Activated naive CD8-positive, alpha-beta T cell treated with anti-CD3 and anti-CD28 coated beads, Interleukin-2, amount 10 ng/mL, durations not matched to agents 7 days and 5 days (primary cell): ENCODE measurements at regions of chr15 and their contacts with region 1.

Region 1: GRCh38 chr15:41904541-41905005 is 10.7 kb upstream of the SPTBN5 start:
- DNase-seq: peak; percentile 70
- ATAC-seq: peak; percentile 81
- H3K4me3 Mint-ChIP-seq: no peak overlapping the region
- H3K27ac Mint-ChIP-seq: peak overlapping the region; percentile 37
- H3K4me1 Mint-ChIP-seq: peaks cover 4% of the 10 kb centered on the region
- H3K27me3 Mint-ChIP-seq: no peaks in the 10 kb centered on the region

Region 2: GRCh38 chr15:41746802-41747201 is 157.8 kb before region 1 on chr15:
- POLR2A ChIA-PET with region 1: no interaction called
- DNase-seq: no peak
- ATAC-seq: no peak
- H3K4me3 Mint-ChIP-seq: no peak overlapping the region
- H3K27ac Mint-ChIP-seq: no peak overlapping the region
- H3K4me1 Mint-ChIP-seq: no peaks in the 10 kb centered on the region
- H3K27me3 Mint-ChIP-seq: no peaks in the 10 kb centered on the region

Region 3: DNA sequence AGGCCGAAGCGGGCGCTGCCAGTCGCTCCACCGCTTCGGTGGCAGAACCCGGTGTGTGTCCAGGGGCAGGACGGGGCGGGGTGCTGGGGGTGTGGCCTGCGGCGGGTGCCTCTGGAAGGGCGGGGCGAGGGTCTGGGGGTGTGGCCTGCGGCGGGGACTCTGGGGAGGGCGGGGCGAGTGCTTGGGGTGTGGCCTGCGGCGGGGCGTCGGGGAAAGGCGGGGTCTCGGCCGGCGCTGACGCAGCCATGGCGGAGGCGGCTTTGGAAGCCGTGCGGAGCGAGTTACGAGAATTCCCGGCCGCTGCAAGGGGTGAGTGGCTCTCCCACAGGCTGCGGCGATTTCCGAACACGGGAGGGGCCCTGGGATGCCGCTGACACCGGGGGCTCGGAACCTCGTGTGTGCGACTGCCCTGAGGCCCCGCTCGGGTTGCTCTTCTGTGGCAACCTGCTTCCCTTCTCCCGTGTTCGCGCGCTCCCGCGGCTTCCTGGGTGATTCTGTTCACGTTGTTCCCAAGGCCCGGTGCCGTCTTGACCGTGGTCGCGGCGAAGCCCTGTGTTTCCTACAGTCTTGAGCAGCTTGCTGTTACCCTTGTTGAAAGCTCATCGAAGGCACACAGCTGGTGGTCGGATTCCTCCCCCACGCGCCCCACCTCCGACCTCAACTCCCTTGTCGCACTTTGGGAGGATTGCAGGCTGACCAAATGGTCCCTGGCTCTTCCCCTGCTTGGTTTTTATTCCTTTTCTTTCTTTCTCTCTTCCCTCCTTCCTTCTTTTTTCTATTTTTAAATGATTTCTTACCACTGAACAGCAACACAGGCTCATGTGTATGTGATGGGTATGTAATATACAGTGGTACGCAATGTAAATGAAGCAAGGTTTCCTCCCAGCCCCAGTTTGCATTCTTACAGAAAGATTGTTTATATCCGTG is 76.4 kb before region 1 on chr15 and contains the start of gene JMJD7:
- POLR2A ChIA-PET with region 1: interaction called, 10 read pairs
- DNase-seq: peak; percentile 97
- ATAC-seq: peak; percentile 68
- H3K4me3 Mint-ChIP-seq: peak within 1 kb of the TSS; percentile 89
- H3K27ac Mint-ChIP-seq: peak within 1 kb of the TSS; percentile 84
- H3K4me1 Mint-ChIP-seq: peaks cover 36% of the 10 kb centered on the region
- H3K27me3 Mint-ChIP-seq: no peaks in the 10 kb centered on the region
- total RNA-seq, gene JMJD7: 33.8 to 54.3 TPM

Region 4: GRCh38 chr15:41917767-41918430 is 13.3 kb after region 1 on chr15:
- POLR2A ChIA-PET with region 1: no interaction called
- DNase-seq: no peak
- ATAC-seq: no peak
- H3K4me3 Mint-ChIP-seq: no peak overlapping the region
- H3K27ac Mint-ChIP-seq: no peak overlapping the region
- H3K4me1 Mint-ChIP-seq: peaks cover 10% of the 10 kb centered on the region
- H3K27me3 Mint-ChIP-seq: no peaks in the 10 kb centered on the region

Region 5: DNA sequence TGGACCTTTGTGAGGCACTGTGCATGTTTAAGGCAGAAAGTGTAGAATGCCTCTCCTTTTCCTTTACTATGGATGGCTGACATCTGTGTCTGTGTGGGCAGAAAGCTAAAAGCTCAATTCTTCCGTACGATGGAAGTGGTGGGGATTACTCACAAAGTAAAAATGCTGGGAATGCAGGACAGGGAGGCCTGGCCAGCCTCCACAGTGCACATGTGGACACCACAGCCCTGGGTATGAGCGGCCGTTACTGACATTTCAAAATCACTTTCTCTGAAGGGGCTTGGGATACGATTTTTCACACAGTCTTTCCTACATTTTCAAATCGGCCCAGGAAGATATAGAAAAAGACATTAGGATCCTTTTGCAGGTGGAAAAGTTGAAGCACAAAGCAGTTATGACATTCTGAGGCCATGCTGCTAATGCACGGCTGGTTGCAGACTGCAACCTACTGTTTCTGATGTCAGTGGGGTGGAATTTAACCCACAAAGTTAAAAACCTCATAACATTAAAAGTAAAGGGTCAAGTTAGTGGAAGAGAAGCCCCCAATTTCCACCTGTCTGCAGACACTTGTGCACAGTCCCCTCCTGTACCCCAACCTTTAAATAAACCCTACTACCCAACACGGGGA is 39.9 kb after region 1 on chr15:
- POLR2A ChIA-PET with region 1: no interaction called
- DNase-seq: no peak
- ATAC-seq: no peak
- H3K4me3 Mint-ChIP-seq: no peak overlapping the region
- H3K27ac Mint-ChIP-seq: no peak overlapping the region
- H3K4me1 Mint-ChIP-seq: peaks cover 10% of the 10 kb centered on the region
- H3K27me3 Mint-ChIP-seq: no peaks in the 10 kb centered on the region